HCT116 (cell line): ENCODE measurements at regions of chr3 and their contacts with region 1.

Region 1: GRCh38 chr3:142586803-142587406 is 8.4 kb upstream of the ATR start:
- DNase-seq: peak; percentile 80
- ATAC-seq: peak; percentile 96
- H3K4me3 ChIP-seq: no peak overlapping the region
- H3K27ac ChIP-seq: no peak overlapping the region
- H3K4me1 ChIP-seq: peaks cover 0 to 9% of the 10 kb centered on the region in 2 experiments; a peak in 2 of 4 replicates
- H3K27me3 ChIP-seq: no peaks in the 10 kb centered on the region
- CTCF ChIP-seq: peak; percentile 70 to 92 (median 74)
- POLR2A ChIP-seq: no peak
- RAD21 ChIP-seq: peak; percentile 98

Region 2: GRCh38 chr3:142636050-142636449 is 49.1 kb after region 1 on chr3:
- CTCF ChIA-PET with region 1: no interaction called
- POLR2A ChIA-PET with region 1: no interaction called
- RAD21 ChIA-PET with region 1: no interaction called
- intact Hi-C with region 1: no loop called
- DNase-seq: no peak
- ATAC-seq: no peak
- H3K4me3 ChIP-seq: no peak overlapping the region
- H3K27ac ChIP-seq: no peak overlapping the region
- H3K4me1 ChIP-seq: no peaks in the 10 kb centered on the region
- H3K27me3 ChIP-seq: no peaks in the 10 kb centered on the region
- CTCF ChIP-seq: no peak
- POLR2A ChIP-seq: no peak
- RAD21 ChIP-seq: no peak

Region 3: DNA sequence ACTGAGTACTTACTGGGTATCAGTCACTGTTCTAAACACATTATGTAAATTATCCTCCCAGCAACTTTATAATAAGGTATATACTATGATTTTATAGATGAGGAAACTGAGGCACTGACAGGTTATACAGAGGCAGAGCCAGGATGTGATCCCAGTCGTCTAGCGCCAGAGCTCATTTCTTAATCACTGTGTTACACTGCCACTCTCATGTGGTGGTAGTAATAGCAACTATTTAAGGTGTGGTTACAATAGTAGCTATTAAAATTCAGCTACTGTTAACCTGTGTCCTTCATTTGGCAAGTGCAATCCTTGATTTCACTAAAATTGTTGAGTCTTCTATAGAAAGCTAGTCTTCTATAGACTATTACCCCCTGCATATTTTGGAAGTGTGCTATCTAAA is 93.8 kb after region 1 on chr3:
- CTCF ChIA-PET with region 1: interaction called, 15 read pairs
- POLR2A ChIA-PET with region 1: no interaction called
- RAD21 ChIA-PET with region 1: interaction called, 7 to 8 read pairs
- intact Hi-C with region 1: loop called (anchors 1 kb)
- DNase-seq: no peak
- ATAC-seq: no peak
- H3K4me3 ChIP-seq: no peak overlapping the region
- H3K27ac ChIP-seq: no peak overlapping the region
- H3K4me1 ChIP-seq: no peaks in the 10 kb centered on the region
- H3K27me3 ChIP-seq: no peaks in the 10 kb centered on the region
- CTCF ChIP-seq: peak in 1 of 3 experiments; percentile 17; a peak in 1 of 6 replicates
- POLR2A ChIP-seq: no peak
- RAD21 ChIP-seq: peak; percentile 49

Region 4: DNA sequence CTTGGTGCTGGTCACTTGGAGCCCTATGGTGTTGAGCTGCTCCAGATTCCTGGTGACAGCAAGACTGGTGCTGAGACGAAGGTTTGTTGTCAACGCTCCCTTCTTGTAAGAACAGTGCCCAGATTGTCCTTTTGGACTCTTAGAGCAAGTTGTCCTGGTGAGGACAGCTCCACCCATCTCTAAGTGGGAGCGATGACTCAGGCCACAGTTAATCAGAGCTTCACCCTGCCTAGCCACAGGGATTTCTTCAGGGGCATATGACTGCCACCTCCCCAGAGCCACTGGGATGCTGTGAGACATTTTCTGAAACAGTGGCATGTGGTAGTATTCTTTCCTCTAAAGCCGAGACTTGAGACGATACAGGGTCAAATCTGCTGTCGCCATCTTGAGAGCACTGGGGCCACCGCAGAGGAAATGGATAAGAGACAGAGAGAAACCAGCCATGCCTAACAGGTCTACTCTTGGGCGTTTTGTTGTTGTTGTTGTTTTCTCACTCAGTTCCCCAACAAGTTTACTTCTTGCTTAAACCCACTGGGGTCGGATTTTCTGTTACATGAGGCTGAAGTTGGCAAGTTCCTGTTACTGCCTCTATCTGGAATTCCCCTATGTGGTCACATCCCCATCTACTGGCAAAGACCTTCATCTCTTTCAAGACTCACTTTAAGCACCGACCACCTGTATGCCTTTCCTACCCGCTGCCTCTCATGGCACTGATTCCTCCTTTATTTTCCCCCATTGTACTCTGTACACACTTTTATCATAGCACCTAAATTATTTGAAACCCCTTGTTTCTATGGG is 317.9 kb after region 1 on chr3:
- CTCF ChIA-PET with region 1: interaction called, 12 read pairs
- POLR2A ChIA-PET with region 1: no interaction called
- RAD21 ChIA-PET with region 1: interaction called in 1 of 2 experiments, 3 read pairs
- intact Hi-C with region 1: loop called (anchors 2 kb)
- DNase-seq: no peak
- ATAC-seq: peak; percentile 81
- H3K4me3 ChIP-seq: no peak overlapping the region
- H3K27ac ChIP-seq: no peak overlapping the region
- H3K4me1 ChIP-seq: peaks cover 0 to 9% of the 10 kb centered on the region in 2 experiments; a peak in 2 of 4 replicates
- H3K27me3 ChIP-seq: no peaks in the 10 kb centered on the region
- CTCF ChIP-seq: peak; percentile 13 to 51 (median 41); a peak in 4 of 6 replicates
- POLR2A ChIP-seq: no peak
- RAD21 ChIP-seq: peak; percentile 73

Region 5: DNA sequence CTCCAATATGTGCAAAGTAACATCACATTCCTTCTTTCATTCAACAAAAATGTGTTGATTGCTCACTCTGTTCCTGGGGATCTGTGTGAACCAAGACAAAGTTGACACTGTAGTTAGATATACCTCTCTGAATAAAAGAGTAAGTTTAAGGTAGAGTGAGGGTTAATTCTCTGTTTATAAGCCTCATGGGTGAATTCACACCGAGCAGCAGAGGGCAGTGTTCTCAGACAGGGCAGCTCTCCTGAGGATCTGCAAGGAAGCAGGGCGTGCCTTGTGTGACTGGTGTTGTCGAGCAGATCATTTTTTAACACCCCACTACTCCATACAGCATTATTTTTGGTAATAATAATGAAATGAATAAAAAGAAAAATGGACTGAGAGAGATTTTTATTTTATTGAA is 342.2 kb after region 1 on chr3:
- CTCF ChIA-PET with region 1: interaction called, 7 read pairs
- POLR2A ChIA-PET with region 1: no interaction called
- RAD21 ChIA-PET with region 1: no interaction called
- intact Hi-C with region 1: loop called (anchors 5 kb)
- DNase-seq: peak; percentile 62
- ATAC-seq: peak; percentile 97
- H3K4me3 ChIP-seq: no peak overlapping the region
- H3K27ac ChIP-seq: no peak overlapping the region
- H3K4me1 ChIP-seq: peaks cover 0 to 4% of the 10 kb centered on the region in 2 experiments; a peak in 1 of 4 replicates
- H3K27me3 ChIP-seq: no peaks in the 10 kb centered on the region
- CTCF ChIP-seq: peak; percentile 71 to 83 (median 76)
- POLR2A ChIP-seq: no peak
- RAD21 ChIP-seq: peak; percentile 70

Region 6: DNA sequence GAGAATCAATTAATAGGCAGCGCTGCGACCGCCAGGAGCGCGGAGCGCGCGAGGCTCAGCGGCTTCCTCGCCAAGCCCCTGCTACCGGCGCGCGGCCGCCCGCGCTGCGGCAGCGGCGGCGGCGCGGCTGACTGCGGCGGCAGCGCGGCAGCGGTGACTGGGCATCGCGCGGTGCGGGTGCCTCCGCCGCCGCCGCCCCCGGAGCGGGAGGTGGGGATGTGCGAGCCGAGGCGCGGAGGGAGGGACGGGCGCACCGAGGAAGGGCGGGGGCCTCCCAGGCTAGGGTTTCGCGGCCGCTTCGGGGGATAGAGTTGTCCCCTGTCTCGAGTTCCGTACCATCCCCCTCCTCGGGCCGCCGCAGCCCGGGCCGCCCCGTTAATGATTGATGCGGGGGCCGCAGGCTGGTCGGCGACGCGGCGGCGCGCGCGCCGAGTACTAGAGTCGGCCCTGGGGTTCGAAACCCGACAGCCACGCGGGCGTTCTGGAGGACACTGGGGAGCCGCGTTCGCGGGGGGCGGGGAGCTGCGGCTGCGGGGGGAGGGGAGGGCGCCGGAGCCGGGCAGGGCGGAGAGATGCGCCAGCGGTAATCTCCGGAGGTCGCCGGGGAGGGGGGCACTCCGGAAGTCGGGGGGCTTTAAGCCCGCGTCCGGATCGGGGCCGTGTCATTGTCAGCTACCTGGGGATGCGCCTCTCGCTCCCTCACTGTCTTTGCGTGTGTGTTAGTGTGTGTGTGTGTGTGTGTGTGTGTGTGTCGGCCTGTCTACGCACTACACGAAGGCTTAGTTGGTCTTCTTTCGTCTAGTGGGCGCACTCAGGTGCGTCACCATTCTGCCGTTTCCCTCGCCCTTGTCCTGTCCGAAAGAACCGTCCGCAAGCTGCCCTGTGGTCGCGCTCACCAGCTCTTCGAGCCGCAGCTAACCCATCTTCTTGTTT is 376.9 kb after region 1 on chr3 and contains the start of gene PAQR9:
- CTCF ChIA-PET with region 1: no interaction called
- POLR2A ChIA-PET with region 1: no interaction called
- RAD21 ChIA-PET with region 1: no interaction called
- intact Hi-C with region 1: no loop called
- DNase-seq: no peak
- ATAC-seq: peak; percentile 59
- H3K4me3 ChIP-seq: peak within 1 kb of the TSS; percentile 39 to 52
- H3K27ac ChIP-seq: no peak within 1 kb of the TSS; the same call in 1 of the 2 replicates
- H3K4me1 ChIP-seq: peaks cover 0 to 8% of the 10 kb centered on the region in 2 experiments; a peak in 2 of 4 replicates
- H3K27me3 ChIP-seq: no peaks in the 10 kb centered on the region
- CTCF ChIP-seq: no peak
- POLR2A ChIP-seq: no peak
- RAD21 ChIP-seq: no peak
- total RNA-seq, gene PAQR9: 0.17 TPM

Region 7: DNA sequence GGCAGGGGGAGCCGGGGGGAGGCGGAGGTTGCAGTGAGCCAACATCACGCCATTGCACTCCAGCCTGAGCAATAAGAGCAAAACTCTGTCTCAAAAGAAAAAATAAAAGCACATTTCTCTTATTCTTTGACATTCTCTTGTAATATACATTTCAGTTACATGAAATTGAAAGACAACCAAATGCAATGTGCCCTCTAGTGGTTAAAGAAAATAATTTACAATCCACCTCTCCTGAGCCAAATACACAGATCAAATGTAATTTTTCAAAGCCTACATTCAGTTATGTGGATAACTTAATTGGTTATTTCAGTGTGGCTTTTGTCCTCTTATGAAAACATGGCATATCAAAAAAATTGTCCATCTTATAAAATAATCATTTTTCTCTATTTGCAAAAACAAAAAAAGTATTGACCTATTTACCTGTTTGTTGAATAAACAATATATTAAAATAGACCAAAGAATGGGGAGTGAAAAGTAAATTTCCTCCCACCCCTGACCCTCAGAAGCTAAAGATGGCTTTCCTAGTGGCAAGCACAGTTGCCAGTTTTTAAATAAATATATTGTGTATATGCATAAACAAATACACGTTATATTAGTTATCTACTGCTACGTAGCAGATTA is 400.3 kb after region 1 on chr3:
- CTCF ChIA-PET with region 1: interaction called, 4 read pairs
- POLR2A ChIA-PET with region 1: no interaction called
- RAD21 ChIA-PET with region 1: no interaction called
- intact Hi-C with region 1: loop called (anchors 2 kb)
- DNase-seq: no peak
- ATAC-seq: peak; percentile 72
- H3K4me3 ChIP-seq: no peak overlapping the region
- H3K27ac ChIP-seq: no peak overlapping the region
- H3K4me1 ChIP-seq: no peaks in the 10 kb centered on the region
- H3K27me3 ChIP-seq: no peaks in the 10 kb centered on the region
- CTCF ChIP-seq: peak; percentile 44 to 76 (median 76)
- POLR2A ChIP-seq: no peak
- RAD21 ChIP-seq: peak; percentile 76

Region 8: GRCh38 chr3:142993958-142994442 is 407.1 kb after region 1 on chr3:
- CTCF ChIA-PET with region 1: interaction called, 6 read pairs
- POLR2A ChIA-PET with region 1: no interaction called
- RAD21 ChIA-PET with region 1: no interaction called
- intact Hi-C with region 1: loop called (anchors 2 kb)
- DNase-seq: peak; percentile 59
- ATAC-seq: peak; percentile 78
- H3K4me3 ChIP-seq: no peak overlapping the region
- H3K27ac ChIP-seq: no peak overlapping the region
- H3K4me1 ChIP-seq: peaks cover 9 to 20% of the 10 kb centered on the region in 2 experiments; a peak in 3 of 4 replicates
- H3K27me3 ChIP-seq: no peaks in the 10 kb centered on the region
- CTCF ChIP-seq: peak; percentile 57 to 84 (median 83)
- POLR2A ChIP-seq: no peak
- RAD21 ChIP-seq: peak; percentile 89

Region 9: DNA sequence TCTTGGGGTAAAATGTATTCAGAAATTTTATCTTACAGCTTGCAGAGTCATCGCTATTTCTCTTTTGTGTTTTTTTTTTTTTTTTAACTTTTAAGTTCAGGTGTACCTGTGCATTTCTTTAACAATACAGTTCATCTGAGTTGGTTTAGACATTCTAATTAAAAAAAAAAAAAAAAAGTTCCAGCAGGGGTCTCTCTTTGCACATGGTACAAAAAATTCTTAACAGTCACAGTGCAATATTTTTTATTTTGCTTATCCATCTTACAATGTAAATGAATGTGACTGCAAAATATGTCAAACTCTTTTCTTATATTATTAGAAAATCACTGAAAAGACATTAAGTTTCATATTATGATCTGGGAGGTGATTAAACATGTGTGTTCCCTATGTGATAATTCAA is 1308.9 kb after region 1 on chr3:
- CTCF ChIA-PET with region 1: no interaction called
- POLR2A ChIA-PET with region 1: no interaction called
- RAD21 ChIA-PET with region 1: no interaction called
- intact Hi-C with region 1: no loop called
- DNase-seq: no peak
- ATAC-seq: 0 out of 2 replicates have a peak, but pooled peaks have one; percentile 30
- H3K4me3 ChIP-seq: no peak overlapping the region
- H3K27ac ChIP-seq: no peak overlapping the region
- H3K4me1 ChIP-seq: no peaks in the 10 kb centered on the region
- H3K27me3 ChIP-seq: no peaks in the 10 kb centered on the region
- CTCF ChIP-seq: peak in 2 of 3 experiments; percentile 28 to 39; a peak in 3 of 6 replicates
- POLR2A ChIP-seq: no peak
- RAD21 ChIP-seq: peak; percentile 56